ENCODE measurements at regions of chr22 and their contacts with region 1.

Region 1: GRCh38 chr22:20965104-20965887 is 1.8 kb upstream of the AIFM3 start:
- DNase-seq: no peak
- H3K4me3 Mint-ChIP-seq: no peak overlapping the region
- H3K27ac Mint-ChIP-seq: no peak overlapping the region
- H3K4me1 Mint-ChIP-seq: peaks cover 11% of the 10 kb centered on the region
- H3K27me3 Mint-ChIP-seq: peaks cover 3% of the 10 kb centered on the region

Region 2: GRCh38 chr22:20981787-20982562 is 16.7 kb after region 1 on chr22 and contains the start of gene LZTR1:
- CTCF ChIA-PET with region 1: interaction called, 3 read pairs
- intact Hi-C with region 1: loop called (anchors 2 kb)
- DNase-seq: peak; percentile 80
- H3K4me3 Mint-ChIP-seq: peak within 1 kb of the TSS; percentile 97
- H3K27ac Mint-ChIP-seq: peak within 1 kb of the TSS; percentile 87
- H3K4me1 Mint-ChIP-seq: peaks cover 41% of the 10 kb centered on the region
- H3K27me3 Mint-ChIP-seq: no peaks in the 10 kb centered on the region
- total RNA-seq, gene LZTR1: 23.1 to 27.4 TPM

Region 3: GRCh38 chr22:21102659-21103267 is 137.5 kb after region 1 on chr22:
- CTCF ChIA-PET with region 1: interaction called, 4 read pairs
- intact Hi-C with region 1: loop called (anchors 10 kb)
- DNase-seq: peak; percentile 89
- H3K4me3 Mint-ChIP-seq: peak overlapping the region; percentile 44
- H3K27ac Mint-ChIP-seq: no peak overlapping the region
- H3K4me1 Mint-ChIP-seq: peaks cover 7% of the 10 kb centered on the region
- H3K27me3 Mint-ChIP-seq: peaks cover 5% of the 10 kb centered on the region

Measured in activated naive CD4-positive, alpha-beta T cell treated with anti-CD3 and anti-CD28 coated beads for 36 hours (primary cell).